ENCODE measurements at regions of chr7 and their contacts with region 1.

Region 1: DNA sequence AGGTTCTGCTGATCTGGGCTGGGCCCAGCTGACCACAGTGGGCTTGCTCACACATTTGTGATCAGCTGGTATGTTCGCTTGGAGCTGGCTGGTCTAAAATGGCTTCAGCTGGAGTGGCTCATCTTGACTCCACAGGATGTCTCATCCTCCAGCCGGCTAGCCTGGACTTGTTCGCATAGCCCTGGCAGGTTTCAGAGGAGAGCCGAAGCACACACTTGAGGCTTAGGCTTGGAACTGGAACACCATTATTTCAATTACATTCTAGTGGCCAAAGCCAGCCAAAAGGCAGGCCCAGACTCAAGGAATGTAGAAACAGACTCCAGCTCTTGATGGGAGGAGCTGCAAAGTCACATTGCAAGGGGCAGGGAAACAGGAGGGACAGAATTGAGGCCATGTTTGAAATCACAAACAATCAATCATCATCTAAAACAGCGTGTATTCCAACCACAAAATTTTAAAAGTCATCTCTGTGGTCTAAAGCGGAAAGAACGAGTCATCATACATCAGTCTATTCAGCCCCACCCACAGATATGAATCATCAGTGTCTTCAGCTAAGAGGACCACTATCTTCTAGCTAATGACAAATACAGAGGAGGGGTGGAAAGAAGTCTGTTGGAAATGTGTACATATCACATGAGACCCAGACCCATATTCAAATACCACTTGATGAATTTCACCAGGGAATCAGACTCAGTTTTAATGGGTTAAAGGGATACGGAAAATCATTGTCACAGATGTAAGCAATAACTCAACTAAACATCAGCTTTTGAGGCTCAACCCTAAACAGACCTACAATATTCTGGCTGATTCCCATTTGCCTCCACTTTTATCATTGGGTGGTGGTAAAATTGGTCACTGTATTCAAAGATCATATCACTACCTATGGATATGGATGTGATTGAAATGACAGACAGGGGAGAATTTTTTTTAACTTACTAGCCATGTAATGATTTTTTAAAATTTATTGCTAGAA is 139.0 kb upstream of the MKLN1 start:
- DNase-seq: peak; percentile 70 to 97
- H3K4me3 ChIP-seq: peak overlapping the region; percentile 31; the same call in 1 of the 2 replicates
- H3K27ac ChIP-seq: peak overlapping the region; percentile 94
- H3K4me1 ChIP-seq: peaks cover 76% of the 10 kb centered on the region
- H3K27me3 ChIP-seq: no peaks in the 10 kb centered on the region
- CTCF ChIP-seq: no peak

Region 2: DNA sequence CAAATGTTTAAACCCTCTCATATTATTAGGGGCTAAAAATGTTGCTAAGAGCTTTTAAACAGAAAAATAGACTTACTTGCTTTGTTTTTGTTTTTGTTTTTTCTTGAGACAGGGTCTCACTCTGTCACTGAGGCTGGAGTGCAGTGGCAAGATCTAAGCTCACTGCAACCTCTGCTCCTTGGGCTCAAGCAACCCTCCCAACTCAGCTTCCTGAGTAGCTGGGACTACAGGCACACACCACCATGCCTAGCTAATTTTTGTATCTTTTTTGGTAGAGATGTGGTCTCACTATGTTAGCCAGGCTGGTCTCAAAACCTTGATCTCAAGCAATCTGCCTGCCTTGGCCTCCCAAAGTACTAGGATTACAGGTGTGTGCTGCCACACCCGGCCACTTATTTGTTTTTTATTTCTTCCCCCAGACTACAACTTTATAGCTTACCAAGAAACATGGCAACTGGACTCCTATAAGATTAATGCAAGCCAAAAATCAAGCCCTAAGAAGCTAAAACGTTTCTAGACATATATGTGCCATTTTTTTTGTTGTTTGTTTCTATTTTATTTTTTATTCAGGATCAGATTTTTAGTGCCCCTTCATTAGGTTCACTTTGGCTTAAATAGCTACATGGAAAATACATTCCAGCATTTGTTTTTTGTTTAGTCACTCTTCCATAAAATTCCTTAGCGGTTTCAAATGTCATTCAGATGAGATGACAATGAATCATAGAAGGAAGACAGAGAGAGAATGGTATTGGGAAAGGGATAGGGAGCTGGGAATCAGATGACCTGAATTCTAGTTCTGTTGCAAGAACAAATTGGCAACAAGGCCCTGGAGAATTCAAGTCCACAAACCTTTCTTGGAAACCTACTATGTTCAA is 24.4 kb before region 1 on chr7:
- CTCF ChIA-PET with region 1: no interaction called
- POLR2A ChIA-PET with region 1: interaction called, 21 read pairs
- intact Hi-C with region 1: loop called (anchors 1 kb)
- DNase-seq: peak; percentile 38 to 97
- H3K4me3 ChIP-seq: peak overlapping the region; percentile 32; the same call in 1 of the 2 replicates
- H3K27ac ChIP-seq: peak overlapping the region; percentile 95
- H3K4me1 ChIP-seq: peaks cover 44% of the 10 kb centered on the region
- H3K27me3 ChIP-seq: no peaks in the 10 kb centered on the region
- CTCF ChIP-seq: 0 out of 2 replicates have a peak, but pooled peaks have one; percentile 14

Region 3: GRCh38 chr7:131170440-131171105 is 18.1 kb before region 1 on chr7:
- CTCF ChIA-PET with region 1: no interaction called
- POLR2A ChIA-PET with region 1: interaction called, 31 read pairs
- intact Hi-C with region 1: loop called (anchors 1 kb)
- DNase-seq: no peak
- H3K4me3 ChIP-seq: no peak overlapping the region
- H3K27ac ChIP-seq: peak overlapping the region; percentile 26; the same call in 1 of the 2 replicates
- H3K4me1 ChIP-seq: peaks cover 48% of the 10 kb centered on the region
- H3K27me3 ChIP-seq: no peaks in the 10 kb centered on the region
- CTCF ChIP-seq: no peak

Region 4: GRCh38 chr7:131302876-131303707 is 114.4 kb after region 1 on chr7:
- CTCF ChIA-PET with region 1: no interaction called
- POLR2A ChIA-PET with region 1: no interaction called
- intact Hi-C with region 1: loop called (anchors 5 kb)
- DNase-seq: peak in 1 of 2 experiments; percentile 38
- H3K4me3 ChIP-seq: no peak overlapping the region
- H3K27ac ChIP-seq: no peak overlapping the region
- H3K4me1 ChIP-seq: peaks cover 11% of the 10 kb centered on the region
- H3K27me3 ChIP-seq: no peaks in the 10 kb centered on the region
- CTCF ChIP-seq: peak; percentile 70